Aorta (tissue), 5 donors: ENCODE measurements at regions of chr10 and their contacts with region 1.

Region 1: GRCh38 chr10:29268011-29268410 is 20.9 kb upstream of the LYZL1 start:
- DNase-seq: no peak
- ATAC-seq: no peak
- H3K4me3 ChIP-seq: no peak overlapping the region
- H3K27ac ChIP-seq: no peak overlapping the region
- H3K4me1 ChIP-seq: no peaks in the 10 kb centered on the region
- H3K27me3 ChIP-seq: no peaks in the 10 kb centered on the region

Region 2: GRCh38 chr10:29249018-29249417 is 19.0 kb before region 1 on chr10:
- intact Hi-C with region 1: loop called in 1 of 2 experiments (anchors 2 kb)
- DNase-seq: no peak
- ATAC-seq: no peak
- H3K4me3 ChIP-seq: no peak overlapping the region
- H3K27ac ChIP-seq: no peak overlapping the region
- H3K4me1 ChIP-seq: no peaks in the 10 kb centered on the region
- H3K27me3 ChIP-seq: no peaks in the 10 kb centered on the region